Posterior cingulate gyrus (tissue), 11 donors: ENCODE measurements at regions of chr1 and their contacts with region 1.

Region 1: GRCh38 chr1:117534995-117535467 is 70.8 kb upstream of the TENT5C start:
- DNase-seq: peak in 2 of 10 donors; percentile 14 to 61

Region 2: DNA sequence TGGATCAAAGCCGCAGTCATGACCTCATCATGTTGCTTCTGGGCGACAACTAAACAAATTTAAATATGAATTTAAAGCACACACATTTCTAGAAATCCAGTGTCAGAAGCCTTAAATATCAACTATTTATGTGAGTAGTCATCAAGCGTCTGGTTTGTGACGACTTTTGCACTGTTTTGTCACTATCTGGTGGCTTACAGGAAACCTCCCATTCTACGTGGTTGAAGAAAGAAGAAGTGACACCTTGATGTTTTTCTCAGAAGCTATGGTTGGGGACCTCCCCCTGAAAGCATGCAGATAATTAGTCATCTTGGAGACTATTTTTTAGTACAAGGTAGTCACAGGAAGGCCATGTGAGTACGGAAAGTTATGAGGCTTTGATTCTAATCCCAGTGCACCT is 129.3 kb after region 1 on chr1:
- intact Hi-C with region 1: loop called (anchors 10 kb)
- DNase-seq: no peak